ENCODE measurements at regions of chr6 and their contacts with region 1.

Region 1: GRCh38 chr6:137313928-137314855 is 95.0 kb upstream of the IFNGR1 start:
- DNase-seq: no peak
- H3K4me3 ChIP-seq: no peak overlapping the region
- CTCF ChIP-seq: peak; percentile 81

Region 2: DNA sequence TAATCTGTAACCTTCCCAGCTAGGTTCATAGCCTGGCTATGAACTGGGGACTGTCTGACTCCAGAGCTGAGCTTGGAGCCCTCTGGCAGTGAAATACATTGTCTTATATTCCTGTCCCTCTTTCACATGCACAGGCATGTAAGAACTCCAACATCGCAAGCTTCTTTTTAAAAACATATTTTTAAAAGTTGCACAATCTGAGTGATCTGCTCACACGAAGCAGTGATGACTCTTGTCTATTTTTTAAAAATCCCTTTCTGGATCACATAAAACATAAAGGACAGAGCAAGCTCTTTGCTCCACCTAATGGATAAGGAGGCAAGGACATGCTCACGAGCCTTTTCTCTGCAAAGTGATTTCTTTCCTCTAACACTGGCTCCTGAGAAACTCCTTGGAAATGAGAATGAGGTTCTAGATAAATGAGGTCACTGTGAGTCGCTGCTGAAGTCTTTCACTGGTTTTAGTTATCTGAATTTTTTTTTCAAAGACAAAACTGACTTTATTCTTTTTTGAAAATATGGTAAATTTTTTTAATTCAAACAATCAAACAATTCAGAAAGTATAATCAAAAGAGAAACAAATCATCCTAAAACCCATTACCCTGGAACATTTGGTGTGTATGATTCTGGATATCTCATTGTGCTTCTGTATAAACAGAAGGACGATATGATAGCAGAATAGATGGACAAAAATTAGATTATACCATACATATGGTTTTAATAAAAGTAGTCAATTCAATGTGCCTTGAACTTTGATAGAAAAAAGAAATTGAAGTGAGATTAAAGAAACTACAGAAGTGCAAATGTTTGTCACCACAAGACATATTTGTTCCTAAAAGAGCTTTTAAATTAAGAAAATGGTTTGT is 300.2 kb before region 1 on chr6:
- CTCF ChIA-PET with region 1: no interaction called
- POLR2A ChIA-PET with region 1: no interaction called
- DNase-seq: peak; percentile 44
- H3K4me3 ChIP-seq: no peak overlapping the region
- CTCF ChIP-seq: peak; percentile 48

Region 3: DNA sequence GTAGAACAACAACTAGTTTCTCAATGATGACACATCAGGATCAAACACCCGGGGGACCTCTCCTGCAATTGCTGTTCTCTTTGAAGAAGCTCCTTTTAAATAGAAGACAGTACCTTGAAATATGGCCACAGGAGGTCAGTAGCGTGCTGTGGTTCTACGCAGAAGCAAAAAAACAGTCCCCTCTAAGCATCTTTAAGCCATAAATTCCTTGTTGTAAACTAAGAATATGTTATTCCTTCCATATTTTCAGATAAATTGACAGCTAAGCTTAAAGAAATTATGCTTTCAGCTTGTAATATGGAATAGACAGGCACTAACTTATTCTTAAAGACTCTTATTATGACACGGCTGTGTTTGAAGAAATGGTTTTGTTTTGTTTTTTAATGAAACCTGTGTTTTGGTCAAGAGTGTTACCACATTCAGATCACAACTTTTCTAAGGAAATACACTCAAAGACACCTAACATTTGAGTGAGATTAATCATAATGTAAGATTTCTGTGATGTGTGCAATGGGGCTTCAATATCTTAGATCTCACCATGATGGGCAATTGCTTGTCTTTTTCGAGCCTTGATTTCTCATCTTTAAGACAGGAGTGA is 219.7 kb before region 1 on chr6:
- CTCF ChIA-PET with region 1: interaction called, 57 read pairs
- POLR2A ChIA-PET with region 1: no interaction called
- DNase-seq: peak; percentile 12
- H3K4me3 ChIP-seq: no peak overlapping the region
- CTCF ChIP-seq: peak; percentile 55

Region 4: DNA sequence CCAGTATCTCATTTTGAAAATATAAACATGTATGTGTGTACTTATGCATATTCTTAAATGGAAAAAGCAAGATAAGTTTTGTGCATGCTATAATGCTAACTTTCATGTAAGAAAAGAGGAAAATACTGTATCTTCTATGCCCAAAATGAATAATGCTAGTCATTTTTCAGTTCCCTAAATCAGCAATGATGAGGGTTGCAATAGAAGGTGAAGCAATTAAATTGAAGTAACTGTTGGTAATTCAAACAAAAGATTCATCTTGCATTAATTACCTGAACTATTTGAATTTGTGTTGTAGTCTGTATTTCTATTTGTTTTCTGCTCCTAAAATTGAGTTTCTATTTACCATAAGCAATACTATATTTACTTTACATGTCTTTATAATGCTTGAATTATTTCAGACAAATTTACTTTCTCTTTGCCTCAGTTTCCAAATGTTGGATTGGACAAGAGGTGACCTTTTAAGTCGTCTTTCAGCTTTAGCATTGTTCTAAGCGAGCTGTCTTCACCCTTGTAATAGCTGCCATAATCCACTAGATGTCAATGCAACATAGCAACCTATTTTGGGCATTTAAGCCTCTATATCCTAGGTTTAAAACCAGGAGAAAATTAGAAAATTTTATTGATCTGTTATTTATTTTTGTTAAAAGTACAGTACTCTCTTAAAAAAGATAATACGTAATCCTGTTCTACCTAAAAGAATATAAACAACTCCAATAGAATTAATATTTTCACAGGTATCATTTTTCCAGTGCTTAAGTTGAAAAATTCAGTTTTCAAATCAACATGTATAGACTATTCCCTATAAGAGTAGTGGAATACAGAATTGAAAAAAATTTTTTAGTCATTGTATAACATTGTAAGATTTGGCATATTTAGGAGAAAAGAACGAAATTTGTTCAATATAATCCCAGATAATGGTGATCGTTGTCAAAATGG is 42.7 kb before region 1 on chr6:
- CTCF ChIA-PET with region 1: interaction called, 40 read pairs
- POLR2A ChIA-PET with region 1: no interaction called
- DNase-seq: no peak
- H3K4me3 ChIP-seq: no peak overlapping the region
- CTCF ChIP-seq: peak; percentile 71

Region 5: GRCh38 chr6:137291441-137291840 is 22.8 kb before region 1 on chr6:
- CTCF ChIA-PET with region 1: interaction called, 14 read pairs
- POLR2A ChIA-PET with region 1: no interaction called
- DNase-seq: no peak
- H3K4me3 ChIP-seq: no peak overlapping the region
- CTCF ChIP-seq: no peak